OCI-LY7 (cell line): ENCODE measurements at regions of chr3 and their contacts with region 1.

Region 1: DNA sequence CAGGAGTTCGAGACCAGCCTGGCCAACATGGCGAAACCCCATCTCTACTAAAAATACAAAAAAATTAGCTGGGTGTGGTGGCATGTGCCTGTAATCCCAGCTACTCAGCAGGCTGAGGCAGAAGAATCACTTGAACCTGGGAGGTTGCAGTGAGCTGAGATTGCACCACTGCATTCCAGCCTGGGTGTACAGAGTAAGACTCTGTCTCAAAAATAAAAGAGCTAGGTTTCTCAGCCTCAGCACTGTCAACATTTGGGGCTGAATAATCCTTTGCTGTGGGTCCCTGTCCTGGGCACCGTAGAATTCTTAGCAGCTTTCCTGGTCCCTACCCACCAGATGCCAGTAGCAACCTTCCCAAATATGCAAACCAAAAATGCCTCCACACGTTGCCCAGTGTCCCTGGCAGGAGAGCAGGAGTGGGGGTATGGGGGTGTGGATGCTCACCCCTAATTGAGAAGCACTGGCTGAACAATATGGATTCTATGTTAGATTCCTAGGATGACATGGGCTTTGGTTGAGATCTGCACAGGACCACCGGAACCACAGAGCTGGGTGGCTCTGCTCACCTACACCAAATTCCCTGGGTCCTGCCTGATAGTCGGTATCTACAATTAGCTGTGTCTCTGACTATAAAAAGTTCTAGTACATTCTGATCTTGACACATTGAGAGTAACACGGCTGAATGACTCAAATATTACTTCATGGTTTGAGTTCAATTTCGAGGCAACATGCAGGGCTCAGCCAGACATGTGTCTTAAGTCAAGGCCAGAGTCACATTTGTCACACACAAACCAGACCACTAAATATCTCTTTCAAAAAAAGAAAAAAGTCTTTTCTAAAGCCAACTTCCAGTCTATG is 577.0 kb upstream of the MDFIC2 start:
- DNase-seq: no peak
- H3K4me3 ChIP-seq: no peak overlapping the region
- H3K27ac ChIP-seq: no peak overlapping the region
- H3K4me1 ChIP-seq: no peaks in the 10 kb centered on the region
- CTCF ChIP-seq: no peak

Region 2: GRCh38 chr3:70905491-70905890 is 16.1 kb after region 1 on chr3:
- CTCF ChIA-PET with region 1: no interaction called
- POLR2A ChIA-PET with region 1: no interaction called
- intact Hi-C with region 1: no loop called
- DNase-seq: no peak
- H3K4me3 ChIP-seq: no peak overlapping the region
- H3K27ac ChIP-seq: no peak overlapping the region
- H3K4me1 ChIP-seq: no peaks in the 10 kb centered on the region
- CTCF ChIP-seq: no peak

Region 3: DNA sequence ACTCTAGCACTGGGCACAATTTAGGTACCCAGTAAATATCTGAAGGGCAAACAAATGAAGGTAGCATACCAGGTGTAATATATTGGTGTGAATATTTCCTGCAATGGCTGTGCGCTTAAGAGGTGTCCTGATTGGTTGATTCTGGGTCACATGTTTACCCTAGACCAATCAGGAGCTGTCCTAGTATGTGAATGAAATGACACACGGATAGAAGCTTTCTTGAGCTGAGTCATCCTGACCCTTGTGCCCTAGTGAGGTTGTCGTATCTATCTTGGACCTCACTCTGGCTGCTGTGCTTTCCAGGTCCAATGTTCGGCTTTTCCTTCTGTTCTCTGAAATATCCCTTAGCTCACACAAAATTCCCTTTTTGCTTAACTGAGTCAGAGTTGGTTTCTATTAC is 752.3 kb after region 1 on chr3:
- CTCF ChIA-PET with region 1: no interaction called
- POLR2A ChIA-PET with region 1: no interaction called
- intact Hi-C with region 1: loop called (anchors 10 kb)
- DNase-seq: no peak
- H3K4me3 ChIP-seq: no peak overlapping the region
- H3K27ac ChIP-seq: no peak overlapping the region
- H3K4me1 ChIP-seq: no peaks in the 10 kb centered on the region
- CTCF ChIP-seq: no peak